Activated CD4-positive, alpha-beta T cell treated with anti-CD3 and anti-CD28 coated beads for 36 hours (primary cell): ENCODE measurements at regions of chr2 and their contacts with region 1.

Region 1: GRCh38 chr2:121699421-121700333 is 37.0 kb downstream of the NIFK start:
- DNase-seq: peak; percentile 95
- ATAC-seq: peak; percentile 98
- H3K4me3 Mint-ChIP-seq: peak overlapping the region; percentile 64
- H3K27ac Mint-ChIP-seq: peak overlapping the region; percentile 95
- H3K4me1 Mint-ChIP-seq: peaks cover 44% of the 10 kb centered on the region
- H3K27me3 Mint-ChIP-seq: no peaks in the 10 kb centered on the region

Region 2: GRCh38 chr2:121519732-121520640 is 179.7 kb before region 1 on chr2:
- CTCF ChIA-PET with region 1: interaction called, 3 read pairs
- POLR2A ChIA-PET with region 1: interaction called, 12 read pairs
- intact Hi-C with region 1: no loop called
- DNase-seq: no peak
- ATAC-seq: no peak
- H3K4me3 Mint-ChIP-seq: no peak overlapping the region
- H3K27ac Mint-ChIP-seq: no peak overlapping the region
- H3K4me1 Mint-ChIP-seq: peaks cover 2% of the 10 kb centered on the region
- H3K27me3 Mint-ChIP-seq: no peaks in the 10 kb centered on the region

Region 3: GRCh38 chr2:121736462-121737341 is 37.0 kb after region 1 on chr2 and contains the start of gene NIFK:
- CTCF ChIA-PET with region 1: no interaction called
- POLR2A ChIA-PET with region 1: interaction called, 6 read pairs
- intact Hi-C with region 1: loop called (anchors 1 to 2 kb)
- DNase-seq: peak; percentile 100
- ATAC-seq: peak; percentile 91
- H3K4me3 Mint-ChIP-seq: peak within 1 kb of the TSS; percentile 83
- H3K27ac Mint-ChIP-seq: peak within 1 kb of the TSS; percentile 97
- H3K4me1 Mint-ChIP-seq: peaks cover 40% of the 10 kb centered on the region
- H3K27me3 Mint-ChIP-seq: no peaks in the 10 kb centered on the region
- total RNA-seq, gene NIFK: 148 to 213 TPM

Region 4: DNA sequence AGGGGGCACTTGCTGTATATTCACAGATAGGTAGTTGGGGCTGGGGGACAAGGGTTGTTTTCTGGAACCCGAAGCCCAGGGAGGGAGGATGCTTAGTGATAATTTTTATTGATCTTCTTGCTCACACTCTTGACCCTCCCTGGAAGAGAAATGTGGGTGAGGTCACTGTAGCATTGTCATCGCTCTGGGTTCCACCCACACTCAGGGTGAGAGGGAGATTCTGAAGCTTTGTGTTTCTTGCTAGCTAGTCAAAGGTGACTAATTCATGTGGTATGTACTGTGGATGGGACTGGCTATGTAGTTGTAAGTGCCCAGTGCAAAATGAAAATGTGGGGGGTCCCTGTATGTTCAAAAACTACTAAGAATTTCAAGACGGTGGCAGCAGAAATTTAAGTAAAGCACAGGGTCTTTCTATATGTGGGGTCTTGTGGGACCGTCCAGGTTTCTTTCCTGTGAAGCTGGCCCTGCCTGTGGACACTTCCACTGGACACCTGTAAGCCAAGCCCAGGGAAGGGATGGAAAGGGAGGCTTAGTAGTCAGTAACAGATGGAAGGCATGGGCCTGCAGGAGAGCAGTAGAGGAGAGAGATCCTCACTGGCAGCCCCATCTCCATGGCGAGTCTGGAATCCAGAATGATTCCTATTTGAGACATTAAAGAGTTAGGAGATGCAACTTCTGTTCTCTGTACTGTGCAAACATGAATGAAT is 90.7 kb after region 1 on chr2:
- CTCF ChIA-PET with region 1: no interaction called
- POLR2A ChIA-PET with region 1: no interaction called
- intact Hi-C with region 1: no loop called
- DNase-seq: no peak
- ATAC-seq: peak; percentile 42
- H3K4me3 Mint-ChIP-seq: no peak overlapping the region
- H3K27ac Mint-ChIP-seq: no peak overlapping the region
- H3K4me1 Mint-ChIP-seq: no peaks in the 10 kb centered on the region
- H3K27me3 Mint-ChIP-seq: peaks cover 19% of the 10 kb centered on the region

Region 5: GRCh38 chr2:121925466-121925865 is 225.8 kb after region 1 on chr2:
- CTCF ChIA-PET with region 1: no interaction called
- POLR2A ChIA-PET with region 1: no interaction called
- intact Hi-C with region 1: no loop called
- DNase-seq: no peak
- ATAC-seq: no peak
- H3K4me3 Mint-ChIP-seq: no peak overlapping the region
- H3K27ac Mint-ChIP-seq: no peak overlapping the region
- H3K4me1 Mint-ChIP-seq: no peaks in the 10 kb centered on the region
- H3K27me3 Mint-ChIP-seq: no peaks in the 10 kb centered on the region

Region 6: DNA sequence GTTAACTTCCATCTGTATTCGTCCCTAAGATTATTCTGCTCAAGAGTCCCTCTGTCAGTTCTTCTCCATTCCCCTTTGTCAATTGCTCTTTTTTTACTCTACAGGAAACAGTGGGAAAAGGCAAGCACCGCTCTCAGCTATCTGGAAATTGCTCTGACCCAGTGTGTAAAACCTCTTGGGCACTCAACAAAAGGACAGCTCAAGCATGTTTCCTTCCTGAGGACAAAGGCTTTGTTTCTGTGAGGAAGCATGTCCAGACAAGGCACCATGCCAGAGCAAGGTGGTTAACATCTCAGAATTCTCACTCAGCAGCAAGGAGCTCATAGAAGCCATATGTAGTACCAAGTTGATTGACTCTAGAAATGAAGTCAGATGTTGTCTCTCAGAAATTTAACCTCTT is 791.3 kb after region 1 on chr2:
- CTCF ChIA-PET with region 1: no interaction called
- POLR2A ChIA-PET with region 1: no interaction called
- intact Hi-C with region 1: no loop called
- DNase-seq: no peak
- ATAC-seq: no peak
- H3K4me3 Mint-ChIP-seq: no peak overlapping the region
- H3K27ac Mint-ChIP-seq: no peak overlapping the region
- H3K4me1 Mint-ChIP-seq: no peaks in the 10 kb centered on the region
- H3K27me3 Mint-ChIP-seq: no peaks in the 10 kb centered on the region

Region 7: DNA sequence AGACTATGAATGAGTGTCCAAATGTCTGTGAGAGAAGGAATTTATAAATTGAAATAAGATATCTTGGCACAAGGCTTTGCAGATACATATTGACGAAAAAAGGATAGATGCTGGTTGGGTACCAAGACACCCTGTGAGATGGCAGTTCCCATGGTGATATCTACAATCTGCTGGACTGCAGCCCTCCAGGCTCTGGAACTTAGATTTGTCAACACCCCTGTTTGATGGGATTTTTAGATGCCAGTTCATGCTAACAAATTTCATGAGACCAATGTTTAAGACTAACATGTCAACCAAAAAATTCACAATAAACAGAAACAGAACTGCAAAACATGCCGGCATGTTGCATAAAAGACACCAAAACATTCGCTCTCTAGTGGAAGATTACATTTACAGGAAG is 1925.1 kb after region 1 on chr2:
- CTCF ChIA-PET with region 1: no interaction called
- POLR2A ChIA-PET with region 1: no interaction called
- intact Hi-C with region 1: no loop called
- DNase-seq: no peak
- ATAC-seq: no peak
- H3K4me3 Mint-ChIP-seq: no peak overlapping the region
- H3K27ac Mint-ChIP-seq: no peak overlapping the region
- H3K4me1 Mint-ChIP-seq: no peaks in the 10 kb centered on the region
- H3K27me3 Mint-ChIP-seq: no peaks in the 10 kb centered on the region